ENCODE measurements at regions of chr1 and their contacts with region 1.

Region 1: DNA sequence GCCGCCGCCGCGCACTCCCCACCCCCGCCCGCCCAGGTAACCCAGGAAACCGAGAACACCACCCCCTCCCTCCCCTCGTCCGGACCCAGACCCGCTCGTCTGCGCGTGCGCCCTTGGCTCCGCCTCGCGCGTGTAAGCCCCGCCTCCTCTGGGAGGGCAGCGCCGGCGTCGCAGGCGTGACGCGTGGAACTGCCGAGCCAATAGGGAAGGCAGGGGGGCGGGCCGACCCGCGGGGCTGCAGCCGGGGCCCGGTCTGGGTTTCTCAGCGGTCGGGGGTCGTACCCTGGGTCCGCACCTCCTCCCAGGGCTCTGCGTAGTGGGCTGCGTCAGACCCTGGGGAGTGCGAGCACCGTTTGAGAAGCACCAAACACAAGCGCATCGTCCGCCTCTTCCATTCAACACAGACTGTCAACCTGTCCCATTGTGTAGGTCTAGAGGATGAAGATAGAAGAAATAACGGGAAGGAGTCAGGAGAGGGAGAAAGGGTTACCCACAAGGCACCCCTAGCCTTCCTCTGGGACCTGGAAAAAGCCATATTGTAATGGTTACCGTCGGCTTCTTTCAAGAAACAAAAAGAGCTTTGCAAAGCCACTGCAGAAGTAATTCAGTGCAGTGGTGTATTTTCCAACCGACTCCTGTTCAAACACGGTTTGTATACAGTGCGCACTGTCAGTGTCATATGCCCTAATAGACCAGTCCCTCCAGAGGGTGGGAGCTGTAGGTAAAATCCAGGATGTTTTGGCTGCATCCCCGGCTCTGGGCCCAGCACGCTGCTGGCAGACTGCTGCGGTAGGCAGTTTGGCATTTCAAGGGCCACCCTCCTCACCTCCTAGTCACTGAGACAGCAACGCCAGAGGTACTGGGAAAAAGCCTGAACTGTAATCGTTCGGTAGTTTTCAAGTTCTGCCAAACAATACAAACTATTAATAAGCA is 473 bp upstream of the LYST start:
- DNase-seq: peak; percentile 97 to 100 (median 99)
- ATAC-seq: peak; percentile 85
- H3K4me3 ChIP-seq: peak overlapping the region; percentile 89
- H3K4me3 Mint-ChIP-seq: peak overlapping the region; percentile 84 to 99 (median 96)
- H3K27ac ChIP-seq: peak overlapping the region; percentile 99
- H3K27ac Mint-ChIP-seq: peak overlapping the region; percentile 93 to 100 (median 98)
- H3K4me1 ChIP-seq: peaks cover 25 to 31% of the 10 kb centered on the region in 2 donors
- H3K4me1 Mint-ChIP-seq: peaks cover 32 to 55% (median 51%) of the 10 kb centered on the region in 7 donors
- H3K27me3 ChIP-seq: no peaks in the 10 kb centered on the region
- H3K27me3 Mint-ChIP-seq: no peaks in the 10 kb centered on the region

Region 2: DNA sequence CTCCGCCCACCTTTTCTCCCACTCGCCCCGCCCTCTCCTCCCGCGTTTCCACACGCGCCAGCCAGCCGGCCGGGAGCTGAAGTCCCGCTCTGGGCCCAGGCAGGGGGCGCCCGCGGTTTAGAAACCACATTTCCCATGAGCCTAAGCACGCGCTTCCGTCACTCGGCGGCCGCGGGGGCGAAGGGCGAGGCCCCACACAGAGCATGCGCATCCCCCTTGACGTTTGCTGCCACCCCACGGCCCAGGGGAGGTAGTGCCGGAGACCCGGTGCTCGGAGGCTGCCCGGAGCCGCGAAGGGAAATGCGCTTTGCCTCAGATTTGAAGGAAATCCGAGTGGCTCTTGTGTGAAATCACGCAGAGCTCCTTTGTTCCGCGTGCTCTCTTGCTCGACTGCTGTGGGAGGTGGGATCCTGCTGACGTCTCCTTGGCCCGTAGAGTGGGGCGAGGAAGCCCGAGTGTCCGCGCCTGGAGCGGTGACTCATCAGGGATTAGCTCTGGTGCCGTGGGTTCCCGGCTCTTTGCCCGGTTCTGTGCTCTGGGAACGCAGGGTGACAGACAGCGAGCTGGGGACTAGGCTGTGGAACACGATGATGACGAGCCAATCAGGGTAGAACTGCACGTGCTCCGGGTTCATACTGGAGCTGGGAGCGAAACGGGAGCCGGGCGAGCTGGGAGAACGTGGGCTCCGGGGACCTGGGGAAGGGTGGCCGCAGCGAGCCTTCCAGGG is 362.5 kb before region 1 on chr1:
- CTCF ChIA-PET with region 1: no interaction called
- POLR2A ChIA-PET with region 1: interaction called, 6 read pairs
- intact Hi-C with region 1: loop called (anchors 1 kb)
- DNase-seq: peak; percentile 95 to 99 (median 98)
- ATAC-seq: peak; percentile 93
- H3K4me3 ChIP-seq: peak overlapping the region; percentile 93
- H3K4me3 Mint-ChIP-seq: peak overlapping the region; percentile 83 to 98 (median 96)
- H3K27ac ChIP-seq: peak overlapping the region; percentile 90
- H3K27ac Mint-ChIP-seq: peak overlapping the region; percentile 94 to 98 (median 97)
- H3K4me1 ChIP-seq: peaks cover 0 to 9% of the 10 kb centered on the region in 2 donors
- H3K4me1 Mint-ChIP-seq: peaks cover 4 to 28% (median 20%) of the 10 kb centered on the region in 7 donors
- H3K27me3 ChIP-seq: no peaks in the 10 kb centered on the region
- H3K27me3 Mint-ChIP-seq: peaks cover 0 to 9% (median 0%) of the 10 kb centered on the region in 5 donors

Region 3: GRCh38 chr1:235888119-235888643 is 21.0 kb after region 1 on chr1:
- CTCF ChIA-PET with region 1: interaction called, 3 read pairs
- POLR2A ChIA-PET with region 1: interaction called, 3 read pairs
- intact Hi-C with region 1: loop called (anchors 1 to 2 kb)
- DNase-seq: peak in 8 of 9 donors; percentile 9 to 54 (median 36)
- ATAC-seq: peak; percentile 90
- H3K4me3 ChIP-seq: peak overlapping the region; percentile 6
- H3K4me3 Mint-ChIP-seq: peak overlapping the region; percentile 49 to 89 (median 84)
- H3K27ac ChIP-seq: peak overlapping the region; percentile 70
- H3K27ac Mint-ChIP-seq: peak overlapping the region; percentile 86 to 98 (median 95)
- H3K4me1 ChIP-seq: peaks cover 0 to 22% of the 10 kb centered on the region in 2 donors
- H3K4me1 Mint-ChIP-seq: peaks cover 8 to 50% (median 21%) of the 10 kb centered on the region in 7 donors
- H3K27me3 ChIP-seq: no peaks in the 10 kb centered on the region
- H3K27me3 Mint-ChIP-seq: no peaks in the 10 kb centered on the region

Region 4: GRCh38 chr1:235933017-235933765 is 66.0 kb after region 1 on chr1:
- CTCF ChIA-PET with region 1: no interaction called
- POLR2A ChIA-PET with region 1: no interaction called
- intact Hi-C with region 1: no loop called
- DNase-seq: no peak
- ATAC-seq: peak; percentile 58
- H3K4me3 ChIP-seq: no peak overlapping the region
- H3K4me3 Mint-ChIP-seq: no peak overlapping the region
- H3K27ac ChIP-seq: no peak overlapping the region
- H3K27ac Mint-ChIP-seq: no peak overlapping the region
- H3K4me1 ChIP-seq: no peaks in the 10 kb centered on the region
- H3K4me1 Mint-ChIP-seq: peaks cover 14 to 29% (median 25%) of the 10 kb centered on the region in 7 donors
- H3K27me3 ChIP-seq: no peaks in the 10 kb centered on the region
- H3K27me3 Mint-ChIP-seq: peaks cover 0 to 6% (median 0%) of the 10 kb centered on the region in 5 donors

Region 5: DNA sequence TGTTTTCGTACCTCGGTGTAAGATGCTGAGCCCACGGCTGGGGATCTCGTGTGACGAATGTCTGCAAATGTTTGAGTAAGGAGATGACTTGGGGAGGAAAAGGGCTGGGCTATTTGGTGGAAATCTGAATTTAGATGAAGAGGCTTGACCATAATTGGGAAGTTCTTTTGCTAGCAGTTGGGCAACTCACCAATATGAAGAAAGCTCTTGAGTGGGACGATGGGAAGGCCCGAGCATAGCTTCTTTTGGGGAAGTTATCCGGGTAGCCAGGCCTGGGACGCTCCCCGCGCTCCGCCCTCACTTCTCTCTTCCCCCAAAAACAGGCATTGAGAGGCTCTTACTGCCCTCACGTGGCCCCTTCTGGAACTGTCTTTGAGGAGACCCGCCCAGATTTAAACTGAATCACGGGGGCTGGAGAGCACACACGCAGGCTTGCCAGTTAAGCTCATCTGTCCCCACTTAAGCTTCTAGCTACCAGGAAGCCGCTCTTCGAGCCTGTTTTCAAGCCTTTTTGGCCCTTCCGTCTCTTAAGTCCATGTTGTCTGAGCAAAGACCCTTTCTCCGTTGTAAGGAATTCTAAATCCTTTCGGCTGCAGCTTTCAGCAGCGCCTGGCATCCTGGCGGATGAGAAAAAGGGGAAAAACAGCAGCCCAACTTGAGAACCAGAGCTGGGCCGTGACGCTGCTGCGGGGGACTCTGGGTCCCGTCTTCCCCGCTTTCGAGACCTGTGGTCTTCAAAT is 104.6 kb after region 1 on chr1:
- CTCF ChIA-PET with region 1: interaction called, 41 read pairs
- POLR2A ChIA-PET with region 1: interaction called, 22 read pairs
- intact Hi-C with region 1: loop called (anchors 1 kb)
- DNase-seq: peak; percentile 71 to 87 (median 84)
- ATAC-seq: peak; percentile 98
- H3K4me3 ChIP-seq: peak overlapping the region; percentile 14
- H3K4me3 Mint-ChIP-seq: peak overlapping the region; percentile 67 to 82 (median 76)
- H3K27ac ChIP-seq: peak overlapping the region; percentile 59
- H3K27ac Mint-ChIP-seq: peak overlapping the region; percentile 87 to 95 (median 90)
- H3K4me1 ChIP-seq: peaks cover 9 to 14% of the 10 kb centered on the region in 2 donors
- H3K4me1 Mint-ChIP-seq: peaks cover 9 to 19% (median 13%) of the 10 kb centered on the region in 7 donors
- H3K27me3 ChIP-seq: no peaks in the 10 kb centered on the region
- H3K27me3 Mint-ChIP-seq: peaks cover 0 to 26% (median 0%) of the 10 kb centered on the region in 5 donors

Region 6: DNA sequence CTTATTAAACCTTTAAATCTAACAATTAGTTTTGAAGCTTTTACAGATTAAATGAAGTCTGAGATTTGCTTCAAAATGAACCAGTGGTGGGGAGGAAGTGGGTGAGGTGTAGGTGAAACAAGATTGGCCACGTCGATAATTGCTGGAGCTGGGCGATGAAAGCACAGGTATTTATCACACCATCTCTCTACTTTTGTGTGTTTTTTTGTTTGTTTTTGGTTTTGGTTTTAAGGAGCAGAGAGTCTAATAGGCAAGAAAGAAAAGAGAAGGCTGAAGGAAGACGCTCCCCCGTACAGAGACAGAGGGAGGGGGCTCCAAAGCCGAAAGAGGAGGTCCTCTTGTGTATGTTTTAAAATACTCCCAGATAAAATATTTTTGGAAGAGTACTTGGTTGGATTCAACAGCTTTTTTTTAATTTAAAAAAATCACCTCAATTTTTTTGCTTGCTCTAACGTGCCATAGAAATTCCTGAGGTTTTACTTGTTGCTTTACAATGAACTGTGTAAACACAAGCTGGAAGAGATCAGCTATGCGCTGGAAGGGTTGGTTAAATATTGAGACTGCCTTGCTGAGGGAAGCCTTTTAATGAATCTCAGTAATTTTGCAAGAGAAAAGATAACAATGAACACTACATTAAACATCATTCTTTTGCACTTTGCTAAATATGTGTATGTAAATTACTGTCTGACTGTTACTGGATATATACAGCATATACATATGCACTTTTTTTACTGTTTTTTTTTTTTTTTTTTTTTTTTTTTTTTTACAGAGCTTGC is 649.9 kb after region 1 on chr1:
- CTCF ChIA-PET with region 1: no interaction called
- POLR2A ChIA-PET with region 1: no interaction called
- intact Hi-C with region 1: loop called (anchors 5 kb)
- DNase-seq: peak in 6 of 9 donors; percentile 18 to 49 (median 34)
- ATAC-seq: peak; percentile 90
- H3K4me3 ChIP-seq: peak overlapping the region; percentile 49
- H3K4me3 Mint-ChIP-seq: peak overlapping the region; percentile 58 to 88 (median 81)
- H3K27ac ChIP-seq: peak overlapping the region; percentile 61
- H3K27ac Mint-ChIP-seq: peak overlapping the region; percentile 33 to 95 (median 88)
- H3K4me1 ChIP-seq: peaks cover 4 to 17% of the 10 kb centered on the region in 2 donors
- H3K4me1 Mint-ChIP-seq: peaks cover 9 to 33% (median 20%) of the 10 kb centered on the region in 7 donors
- H3K27me3 ChIP-seq: no peaks in the 10 kb centered on the region
- H3K27me3 Mint-ChIP-seq: peaks cover 0 to 15% (median 0%) of the 10 kb centered on the region in 5 donors

Measured in naive thymus-derived CD4-positive, alpha-beta T cell (primary cell).